AG04450 (cell line): ENCODE measurements at regions of chr15 and their contacts with region 1.

Region 1: DNA sequence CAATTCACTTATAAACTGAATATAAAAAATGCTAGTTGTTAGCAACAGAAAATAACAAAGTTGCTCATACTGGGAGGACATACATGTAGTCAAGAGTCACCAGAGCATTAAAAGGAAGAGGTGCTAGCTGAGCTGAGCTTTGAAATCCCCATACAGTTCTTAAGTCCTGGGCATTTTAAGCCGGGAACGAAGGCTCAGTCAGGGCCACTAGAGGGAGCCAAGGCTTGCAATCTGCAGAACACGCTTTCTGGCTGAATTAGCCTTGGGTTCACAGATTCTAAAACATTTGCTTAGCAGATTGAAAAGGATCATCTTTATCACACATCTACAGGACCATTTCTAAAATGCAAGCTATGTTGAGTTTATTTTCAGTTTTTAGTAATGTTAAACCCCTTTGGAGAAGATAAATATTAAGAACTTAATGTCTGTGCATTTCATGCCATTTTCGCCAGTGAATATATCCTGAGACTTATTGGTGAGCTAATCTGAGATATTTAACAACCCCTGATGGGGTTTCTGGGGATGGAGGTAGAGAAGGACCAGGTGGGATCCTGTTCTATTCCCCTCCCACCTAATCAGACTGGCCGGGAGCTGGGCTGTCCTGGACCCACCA is 26.3 kb upstream of the MNS1 start:
- DNase-seq: peak; percentile 61
- H3K4me3 ChIP-seq: no peak overlapping the region
- H3K27ac ChIP-seq: no peak overlapping the region
- H3K27me3 ChIP-seq: peaks cover 12% of the 10 kb centered on the region
- CTCF ChIP-seq: peak; percentile 97

Region 2: DNA sequence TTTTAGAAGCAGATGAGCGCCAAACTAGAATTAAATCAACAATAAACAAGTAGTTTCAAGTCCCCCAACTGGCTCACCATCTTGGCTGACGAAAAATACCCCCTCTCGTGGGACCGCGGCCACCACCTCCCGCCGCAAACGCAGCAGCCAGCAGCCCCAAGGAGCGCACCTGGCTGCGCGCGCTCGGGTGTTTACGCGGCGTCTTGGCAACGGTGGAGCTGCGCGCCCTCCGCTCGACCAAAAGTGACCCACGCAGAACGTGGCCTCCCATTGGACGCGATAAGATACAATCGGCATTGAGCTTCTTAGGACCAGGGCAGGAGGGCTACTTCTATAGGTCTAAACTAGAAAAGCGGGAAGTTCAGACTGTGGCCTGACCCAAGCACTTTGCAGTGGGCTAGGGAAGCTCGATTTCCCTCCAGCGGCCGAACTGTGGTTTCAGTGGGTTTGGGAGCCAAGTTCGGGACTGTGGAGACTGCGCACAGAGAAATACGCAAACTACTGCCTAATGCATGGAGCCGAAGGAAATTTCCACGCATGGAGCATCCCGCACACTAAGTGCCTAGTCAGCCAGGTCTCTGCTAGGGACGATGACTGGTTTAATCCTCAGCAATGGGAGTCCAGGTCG is 26.2 kb before region 1 on chr15 and contains the start of gene MNS1:
- CTCF ChIA-PET with region 1: interaction called, 12 read pairs
- POLR2A ChIA-PET with region 1: no interaction called
- DNase-seq: peak; percentile 81
- H3K4me3 ChIP-seq: peak within 1 kb of the TSS; percentile 59
- H3K27ac ChIP-seq: no peak within 1 kb of the TSS
- H3K27me3 ChIP-seq: no peaks in the 10 kb centered on the region
- CTCF ChIP-seq: no peak
- polyA plus RNA-seq, gene MNS1: 1.3 and 1.9 TPM in 2 replicates

Region 3: GRCh38 chr15:56683908-56684307 is 192.7 kb after region 1 on chr15:
- CTCF ChIA-PET with region 1: interaction called, 10 read pairs
- POLR2A ChIA-PET with region 1: no interaction called
- DNase-seq: no peak
- H3K4me3 ChIP-seq: no peak overlapping the region
- H3K27ac ChIP-seq: no peak overlapping the region
- H3K27me3 ChIP-seq: no peaks in the 10 kb centered on the region
- CTCF ChIP-seq: no peak

Region 4: DNA sequence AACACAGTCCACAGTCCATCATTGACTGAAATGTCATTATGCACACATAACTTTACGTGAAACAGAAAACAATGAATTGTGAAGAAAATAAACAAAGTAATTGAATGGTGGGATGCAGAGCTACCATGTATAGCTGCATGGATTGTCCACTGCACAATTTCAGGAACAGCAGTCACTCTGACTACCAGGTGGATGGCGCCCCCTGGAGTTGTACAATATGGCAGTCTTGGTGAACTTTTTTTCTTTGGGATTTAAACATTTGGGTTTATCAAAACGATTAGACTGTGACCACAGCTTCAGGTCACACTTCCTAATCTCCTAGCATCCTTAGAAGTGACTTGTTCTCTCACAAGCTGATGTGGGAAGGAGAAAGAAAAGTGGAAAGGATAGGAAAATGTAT is 378.4 kb after region 1 on chr15:
- CTCF ChIA-PET with region 1: interaction called, 15 read pairs
- POLR2A ChIA-PET with region 1: no interaction called
- DNase-seq: no peak
- H3K4me3 ChIP-seq: no peak overlapping the region
- H3K27ac ChIP-seq: no peak overlapping the region
- H3K27me3 ChIP-seq: no peaks in the 10 kb centered on the region
- CTCF ChIP-seq: peak; percentile 43

Region 5: GRCh38 chr15:57146506-57147201 is 655.4 kb after region 1 on chr15:
- CTCF ChIA-PET with region 1: interaction called, 20 read pairs
- POLR2A ChIA-PET with region 1: no interaction called
- DNase-seq: no peak
- H3K4me3 ChIP-seq: peak overlapping the region; percentile 26
- H3K27ac ChIP-seq: no peak overlapping the region
- H3K27me3 ChIP-seq: no peaks in the 10 kb centered on the region
- CTCF ChIP-seq: peak; percentile 70

Region 6: GRCh38 chr15:57527382-57528091 is 1036.3 kb after region 1 on chr15:
- CTCF ChIA-PET with region 1: interaction called, 30 read pairs
- POLR2A ChIA-PET with region 1: no interaction called
- DNase-seq: peak; percentile 78
- H3K4me3 ChIP-seq: no peak overlapping the region
- H3K27ac ChIP-seq: no peak overlapping the region
- H3K27me3 ChIP-seq: peaks cover 9% of the 10 kb centered on the region
- CTCF ChIP-seq: peak; percentile 65